ENCODE measurements at regions of chr7 and their contacts with region 1.

Region 1: DNA sequence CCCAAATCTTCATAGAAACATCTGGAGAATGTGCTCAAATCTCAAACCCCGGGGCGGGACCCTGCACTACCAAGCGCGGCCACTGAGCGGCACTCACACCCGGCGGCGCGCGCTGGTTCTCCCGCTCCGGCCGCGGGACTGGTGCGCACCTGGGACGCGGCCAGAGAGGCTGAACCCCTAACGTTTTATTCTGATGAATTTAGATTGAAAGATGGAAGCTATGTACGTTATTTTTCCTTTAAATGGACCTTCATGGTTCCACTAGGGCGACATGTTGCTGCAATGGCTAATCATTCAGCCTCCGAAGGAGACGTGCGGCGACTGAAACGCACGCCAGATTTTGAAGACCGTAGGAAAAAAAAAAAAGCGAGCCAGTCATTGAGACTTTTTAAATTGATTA is 107.0 kb upstream of the INSIG1 start:
- DNase-seq: peak in 1 of 2 experiments; percentile 72
- H3K4me3 ChIP-seq: no peak overlapping the region
- H3K27ac ChIP-seq: no peak overlapping the region
- H3K4me1 ChIP-seq: 0 out of 2 replicates have a peak, but pooled peaks cover 5% of the 10 kb centered on the region
- H3K27me3 ChIP-seq: peaks cover 49% of the 10 kb centered on the region
- CTCF ChIP-seq: peak; percentile 98

Region 2: DNA sequence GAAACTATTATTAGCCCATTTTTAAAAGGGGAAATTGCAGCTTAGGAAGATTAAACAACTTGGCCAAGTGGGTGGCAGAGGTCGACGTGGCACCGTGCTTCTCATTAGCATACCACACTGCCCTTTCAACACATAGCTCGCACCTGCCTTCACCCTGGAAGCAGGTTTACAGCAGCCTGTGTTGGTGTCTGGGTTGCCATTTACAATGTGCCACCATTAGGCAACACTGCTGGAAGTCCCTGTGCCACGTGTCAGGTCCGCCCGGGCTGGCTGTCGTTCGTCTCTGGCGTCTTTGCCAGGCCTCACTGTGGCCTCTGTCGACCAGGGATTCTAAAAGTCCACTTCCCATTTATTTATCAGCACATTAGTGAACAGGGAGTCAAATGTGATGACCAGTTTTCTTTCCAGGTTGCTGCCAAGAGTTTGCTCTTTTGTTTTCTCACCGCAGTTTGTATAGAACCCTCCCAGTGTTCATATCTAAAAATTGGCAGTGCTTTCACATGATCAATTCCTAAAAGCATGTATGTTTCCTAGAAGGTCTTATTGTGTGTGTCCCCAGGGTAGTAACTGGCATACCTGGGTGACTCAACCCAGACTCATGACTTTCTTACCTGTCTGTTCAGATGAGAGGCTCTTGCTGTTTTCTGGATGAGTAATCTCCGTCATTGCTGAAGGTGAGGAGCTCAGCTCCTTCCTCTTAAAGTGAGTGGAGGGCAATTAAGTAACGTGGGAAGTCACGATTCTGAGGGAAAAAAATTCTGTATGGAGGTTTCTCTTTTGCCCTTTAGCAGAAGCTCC is 116.2 kb after region 1 on chr7:
- CTCF ChIA-PET with region 1: no interaction called
- POLR2A ChIA-PET with region 1: interaction called, 37 read pairs
- intact Hi-C with region 1: no loop called
- DNase-seq: peak; percentile 51 to 96
- H3K4me3 ChIP-seq: no peak overlapping the region
- H3K27ac ChIP-seq: peak overlapping the region; percentile 38
- H3K4me1 ChIP-seq: peaks cover 22% of the 10 kb centered on the region
- H3K27me3 ChIP-seq: no peaks in the 10 kb centered on the region
- CTCF ChIP-seq: no peak

Measured in PC-9 (cell line).